Mammary epithelial cell (primary cell): ENCODE measurements at regions of chr16 and their contacts with region 1.

Region 1: DNA sequence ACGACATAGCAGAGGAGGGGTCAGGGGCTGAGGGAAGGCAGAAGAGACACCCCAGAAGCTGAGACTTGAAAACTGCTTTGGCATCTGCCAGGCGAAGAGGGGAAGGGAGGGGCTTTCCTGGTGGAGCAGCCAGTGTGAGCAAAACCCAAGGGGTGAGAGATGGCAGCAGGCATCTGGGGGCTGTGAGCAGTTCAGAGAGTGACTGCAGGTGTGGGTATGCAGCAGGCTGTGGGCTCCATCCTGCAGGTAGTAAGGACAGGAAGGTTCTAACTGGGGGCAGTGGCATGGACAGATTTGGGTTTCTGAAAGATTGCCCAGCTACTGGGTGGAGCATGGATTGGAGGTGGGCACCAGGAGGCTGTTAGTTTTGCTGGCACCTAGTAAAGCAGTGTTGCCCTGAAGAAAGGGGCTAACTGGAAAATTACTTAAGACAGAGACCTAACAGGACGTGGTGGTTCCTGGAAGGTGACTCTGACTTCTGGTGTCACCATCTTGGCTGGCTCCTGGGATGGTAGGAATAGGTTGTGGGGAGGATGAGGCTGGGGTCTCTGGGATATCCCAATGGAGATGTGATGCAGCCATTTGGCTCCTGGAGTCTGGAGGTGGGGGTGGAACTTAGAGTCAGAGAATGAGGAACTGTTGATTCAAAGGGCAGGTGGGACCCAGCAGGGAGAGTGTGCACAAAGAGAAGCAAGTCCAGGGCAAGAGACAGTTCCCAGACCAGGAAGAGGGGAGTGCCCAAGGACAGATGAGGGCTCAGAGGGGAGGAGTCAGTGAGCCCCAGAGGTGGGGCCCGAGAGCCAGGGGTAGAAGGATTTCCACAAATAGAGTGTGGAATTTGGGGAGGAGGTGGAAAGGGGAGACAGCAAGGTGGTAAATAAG is 11.2 kb downstream of the BCL7C start:
- DNase-seq: no peak
- H3K4me3 ChIP-seq: no peak overlapping the region
- H3K27ac ChIP-seq: no peak overlapping the region
- H3K4me1 ChIP-seq: no peaks in the 10 kb centered on the region
- H3K27me3 ChIP-seq: no peaks in the 10 kb centered on the region
- CTCF ChIP-seq: no peak

Region 2: GRCh38 chr16:30813821-30814189 is 68.9 kb before region 1 on chr16:
- CTCF ChIA-PET with region 1: no interaction called
- dilution Hi-C with region 1: loop called (anchors 5 kb)
- in situ Hi-C with region 1: no loop called
- intact Hi-C with region 1: no loop called
- DNase-seq: no peak
- H3K4me3 ChIP-seq: peak overlapping the region; percentile 37 to 62 (median 48)
- H3K27ac ChIP-seq: peak overlapping the region; percentile 24
- H3K4me1 ChIP-seq: peaks cover 11% of the 10 kb centered on the region
- H3K27me3 ChIP-seq: no peaks in the 10 kb centered on the region
- CTCF ChIP-seq: no peak

Region 3: GRCh38 chr16:30964574-30965226 is 82.0 kb after region 1 on chr16:
- CTCF ChIA-PET with region 1: no interaction called
- dilution Hi-C with region 1: loop called (anchors 5 kb)
- in situ Hi-C with region 1: no loop called
- intact Hi-C with region 1: no loop called
- DNase-seq: no peak
- H3K4me3 ChIP-seq: no peak overlapping the region
- H3K27ac ChIP-seq: no peak overlapping the region
- H3K4me1 ChIP-seq: no peaks in the 10 kb centered on the region
- H3K27me3 ChIP-seq: no peaks in the 10 kb centered on the region
- CTCF ChIP-seq: no peak

Region 4: DNA sequence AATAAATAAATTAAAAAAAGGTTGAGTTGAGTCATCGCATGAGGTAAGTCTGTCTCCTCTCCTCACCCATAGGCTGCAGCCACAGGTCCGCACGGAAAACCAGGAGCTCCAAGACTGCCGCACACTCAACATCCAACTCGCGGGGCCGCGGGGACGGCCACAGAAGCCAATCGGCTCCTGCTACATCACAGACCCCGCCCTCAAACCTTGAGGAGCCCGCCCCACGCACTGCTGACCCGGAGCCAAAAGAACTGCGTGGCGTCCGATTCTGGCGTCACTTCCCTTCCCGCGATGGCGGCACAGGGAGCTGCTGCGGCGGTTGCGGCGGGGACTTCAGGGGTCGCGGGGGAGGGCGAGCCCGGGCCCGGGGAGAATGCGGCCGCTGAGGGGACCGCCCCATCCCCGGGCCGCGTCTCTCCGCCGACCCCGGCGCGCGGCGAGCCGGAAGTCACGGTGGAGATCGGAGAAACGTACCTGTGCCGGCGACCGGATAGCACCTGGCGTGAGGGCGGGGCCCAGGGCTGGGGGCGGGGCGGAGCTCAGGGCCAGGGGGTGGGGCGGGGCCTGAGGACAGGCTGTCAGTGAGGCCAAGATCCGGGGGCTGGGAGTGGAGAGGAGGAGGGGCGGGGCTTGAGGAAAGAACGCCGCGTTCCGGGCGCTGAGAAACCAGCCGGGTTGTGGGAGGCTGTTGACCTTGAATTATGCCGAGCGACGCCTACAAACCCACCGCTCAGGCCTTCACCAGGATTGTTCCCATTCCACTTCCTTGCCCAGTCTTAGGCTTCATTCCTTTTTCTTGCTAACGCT is 234.9 kb after region 1 on chr16 and contains the start of gene KAT8:
- CTCF ChIA-PET with region 1: no interaction called
- dilution Hi-C with region 1: no loop called
- in situ Hi-C with region 1: no loop called
- intact Hi-C with region 1: no loop called
- DNase-seq: peak; percentile 98
- H3K4me3 ChIP-seq: peak within 1 kb of the TSS; percentile 57 to 80 (median 65)
- H3K27ac ChIP-seq: peak within 1 kb of the TSS; percentile 100
- H3K4me1 ChIP-seq: peaks cover 14% of the 10 kb centered on the region
- H3K27me3 ChIP-seq: no peaks in the 10 kb centered on the region
- CTCF ChIP-seq: no peak
- total RNA-seq, gene KAT8: 22.7 to 34.0 TPM